ENCODE measurements at regions of chr11 and their contacts with region 1.

Region 1: GRCh38 chr11:43944761-43945311 is 2.4 kb downstream of the C11orf96 start:
- DNase-seq: no peak
- H3K4me3 ChIP-seq: no peak overlapping the region
- H3K27me3 ChIP-seq: peaks cover 46% of the 10 kb centered on the region
- CTCF ChIP-seq: peak; percentile 87

Region 2: GRCh38 chr11:43895601-43896000 is 49.2 kb before region 1 on chr11:
- CTCF ChIA-PET with region 1: interaction called, 50 read pairs
- POLR2A ChIA-PET with region 1: no interaction called
- DNase-seq: no peak
- H3K4me3 ChIP-seq: no peak overlapping the region
- H3K27me3 ChIP-seq: no peaks in the 10 kb centered on the region
- CTCF ChIP-seq: no peak

Region 3: GRCh38 chr11:43920598-43921419 is 24.0 kb before region 1 on chr11:
- CTCF ChIA-PET with region 1: interaction called, 12 read pairs
- POLR2A ChIA-PET with region 1: no interaction called
- DNase-seq: peak; percentile 99
- H3K4me3 ChIP-seq: no peak overlapping the region
- H3K27me3 ChIP-seq: no peaks in the 10 kb centered on the region
- CTCF ChIP-seq: no peak

Region 4: GRCh38 chr11:43955381-43956118 is 10.7 kb after region 1 on chr11:
- CTCF ChIA-PET with region 1: interaction called, 12 read pairs
- POLR2A ChIA-PET with region 1: no interaction called
- DNase-seq: no peak
- H3K4me3 ChIP-seq: no peak overlapping the region
- H3K27me3 ChIP-seq: no peaks in the 10 kb centered on the region; the same call in 1 of the 2 replicates
- CTCF ChIP-seq: no peak

Region 5: GRCh38 chr11:44036811-44037657 is 92.2 kb after region 1 on chr11:
- CTCF ChIA-PET with region 1: interaction called, 17 read pairs
- POLR2A ChIA-PET with region 1: no interaction called
- DNase-seq: no peak
- H3K4me3 ChIP-seq: no peak overlapping the region
- H3K27me3 ChIP-seq: peaks cover 1% of the 10 kb centered on the region
- CTCF ChIP-seq: peak; percentile 89